Naive thymus-derived CD4-positive, alpha-beta T cell (primary cell): ENCODE measurements at regions of chr10 and their contacts with region 1.

Region 1: GRCh38 chr10:62681211-62681940 is 123.1 kb upstream of the ADO start:
- DNase-seq: peak in 8 of 9 donors; percentile 7 to 84 (median 22)
- ATAC-seq: peak; percentile 96
- H3K4me3 ChIP-seq: no peak overlapping the region
- H3K4me3 Mint-ChIP-seq: peak overlapping the region in 1 of 10 donors; percentile 59
- H3K27ac ChIP-seq: no peak overlapping the region
- H3K27ac Mint-ChIP-seq: peak overlapping the region in 3 of 9 donors; percentile 11 to 83 (median 78)
- H3K4me1 ChIP-seq: peaks cover 6 to 18% of the 10 kb centered on the region in 2 donors
- H3K4me1 Mint-ChIP-seq: peaks cover 8 to 45% (median 14%) of the 10 kb centered on the region in 7 donors
- H3K27me3 ChIP-seq: no peaks in the 10 kb centered on the region
- H3K27me3 Mint-ChIP-seq: peaks cover 0 to 6% (median 0%) of the 10 kb centered on the region in 5 donors

Region 2: DNA sequence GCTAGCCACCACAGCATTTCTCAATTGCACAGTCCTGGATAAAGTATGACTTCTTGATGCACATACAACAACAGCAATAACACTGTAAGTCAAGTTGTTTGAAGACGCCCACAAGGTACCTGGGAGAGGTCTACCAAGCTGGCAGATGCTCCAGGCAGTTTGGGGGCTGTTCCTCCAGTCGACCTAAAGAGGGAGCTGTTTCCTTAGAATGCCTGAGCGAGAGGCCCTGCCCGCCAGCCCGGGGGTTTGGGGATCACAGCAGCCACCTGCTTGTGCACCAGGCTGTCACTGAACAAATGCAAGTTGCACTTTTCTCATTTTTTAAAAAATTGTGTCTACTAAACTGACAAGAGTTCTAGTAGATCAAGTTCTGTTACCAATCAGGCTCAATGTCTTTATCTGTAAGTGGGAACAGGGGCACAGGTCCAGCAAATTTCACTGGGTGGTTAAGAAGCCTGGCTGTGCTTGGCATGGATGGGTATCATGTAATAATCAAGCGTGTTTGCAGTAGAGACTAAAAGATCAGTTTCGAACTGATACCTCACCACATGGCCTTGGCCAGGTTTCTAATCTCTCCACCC is 70.6 kb before region 1 on chr10:
- CTCF ChIA-PET with region 1: no interaction called
- POLR2A ChIA-PET with region 1: no interaction called
- intact Hi-C with region 1: loop called in 1 of 2 experiments (anchors 1 kb)
- DNase-seq: peak; percentile 48 to 81 (median 74)
- ATAC-seq: peak; percentile 93
- H3K4me3 ChIP-seq: no peak overlapping the region
- H3K4me3 Mint-ChIP-seq: no peak overlapping the region
- H3K27ac ChIP-seq: no peak overlapping the region
- H3K27ac Mint-ChIP-seq: peak overlapping the region in 1 of 9 donors; percentile 50
- H3K4me1 ChIP-seq: no peaks in the 10 kb centered on the region
- H3K4me1 Mint-ChIP-seq: peaks cover 0 to 36% (median 0%) of the 10 kb centered on the region in 7 donors
- H3K27me3 ChIP-seq: no peaks in the 10 kb centered on the region
- H3K27me3 Mint-ChIP-seq: peaks cover 0 to 14% (median 4%) of the 10 kb centered on the region in 5 donors

Region 3: DNA sequence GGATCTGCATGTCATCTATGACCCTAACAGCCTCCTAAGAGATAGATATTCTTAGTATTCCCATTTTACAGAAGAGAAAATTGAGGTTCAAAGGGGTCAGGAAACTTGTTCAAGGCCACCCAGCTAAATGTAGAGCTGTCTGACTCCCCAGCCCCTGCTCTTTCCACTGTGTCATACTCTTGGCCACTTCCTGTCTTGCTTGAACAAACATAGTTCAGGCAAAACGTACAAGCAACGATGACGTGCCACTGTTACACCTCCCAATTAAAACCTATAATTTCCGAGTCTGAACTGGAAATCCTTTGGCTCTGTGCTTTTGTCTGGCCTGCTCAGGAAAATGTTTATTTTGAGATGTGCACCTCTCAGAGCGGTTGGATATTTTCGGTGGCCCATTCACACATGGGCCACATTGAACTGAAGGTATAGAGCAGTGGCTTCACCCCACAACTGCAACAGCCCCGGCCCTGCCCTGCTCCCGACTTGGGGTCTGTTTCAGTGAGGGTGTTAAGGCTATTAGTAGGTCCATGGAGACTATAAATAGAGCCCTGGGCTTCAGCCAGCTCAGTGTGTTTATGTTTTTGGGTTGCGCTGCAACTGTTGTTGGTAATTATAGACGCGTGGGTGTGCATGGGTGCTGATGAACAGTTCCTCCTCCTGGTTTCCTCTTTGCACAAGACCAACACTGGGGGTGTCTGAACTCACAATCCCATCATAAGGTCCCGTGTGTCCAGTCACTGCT is 49.1 kb before region 1 on chr10:
- CTCF ChIA-PET with region 1: interaction called, 3 read pairs
- POLR2A ChIA-PET with region 1: no interaction called
- intact Hi-C with region 1: loop called (anchors 1 to 5 kb)
- DNase-seq: peak in 8 of 9 donors; percentile 45 to 69 (median 54)
- ATAC-seq: peak; percentile 82
- H3K4me3 ChIP-seq: peak overlapping the region; percentile 19
- H3K4me3 Mint-ChIP-seq: peak overlapping the region in 4 of 10 donors; percentile 19 to 67 (median 45)
- H3K27ac ChIP-seq: no peak overlapping the region
- H3K27ac Mint-ChIP-seq: peak overlapping the region; percentile 3 to 89 (median 54)
- H3K4me1 ChIP-seq: peaks cover 15 to 29% of the 10 kb centered on the region in 2 donors
- H3K4me1 Mint-ChIP-seq: peaks cover 8 to 40% (median 15%) of the 10 kb centered on the region in 7 donors
- H3K27me3 ChIP-seq: no peaks in the 10 kb centered on the region
- H3K27me3 Mint-ChIP-seq: no peaks in the 10 kb centered on the region

Region 4: DNA sequence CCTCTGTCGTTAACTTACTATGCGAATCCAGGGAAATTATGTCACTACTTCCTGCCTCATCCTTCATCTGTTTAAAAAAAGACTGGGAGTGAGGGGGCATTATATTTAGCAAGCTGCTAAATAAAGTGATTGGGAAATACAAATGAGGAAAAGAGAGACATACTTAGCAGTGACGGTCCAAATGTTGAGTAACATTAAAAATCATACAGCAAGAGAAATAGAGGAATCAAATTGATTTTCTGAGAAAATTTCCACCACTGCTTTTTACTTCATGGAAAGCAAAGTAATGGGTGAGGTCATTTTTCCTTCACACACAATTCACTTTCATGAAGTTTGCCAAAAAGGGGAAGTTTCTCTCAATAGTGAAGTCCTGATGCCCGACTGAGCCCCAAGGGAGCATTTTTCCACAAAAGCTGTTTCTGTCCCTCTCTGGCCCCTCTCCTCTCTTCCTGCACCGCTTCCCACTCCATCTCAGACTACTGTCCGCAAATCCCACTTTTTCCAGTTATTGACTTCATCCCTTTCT is 61.2 kb after region 1 on chr10:
- CTCF ChIA-PET with region 1: no interaction called
- POLR2A ChIA-PET with region 1: no interaction called
- intact Hi-C with region 1: no loop called
- DNase-seq: no peak
- ATAC-seq: no peak
- H3K4me3 ChIP-seq: no peak overlapping the region
- H3K4me3 Mint-ChIP-seq: no peak overlapping the region
- H3K27ac ChIP-seq: no peak overlapping the region
- H3K27ac Mint-ChIP-seq: no peak overlapping the region
- H3K4me1 ChIP-seq: no peaks in the 10 kb centered on the region
- H3K4me1 Mint-ChIP-seq: peaks cover 0 to 12% (median 0%) of the 10 kb centered on the region in 7 donors
- H3K27me3 ChIP-seq: no peaks in the 10 kb centered on the region
- H3K27me3 Mint-ChIP-seq: no peaks in the 10 kb centered on the region

Region 5: DNA sequence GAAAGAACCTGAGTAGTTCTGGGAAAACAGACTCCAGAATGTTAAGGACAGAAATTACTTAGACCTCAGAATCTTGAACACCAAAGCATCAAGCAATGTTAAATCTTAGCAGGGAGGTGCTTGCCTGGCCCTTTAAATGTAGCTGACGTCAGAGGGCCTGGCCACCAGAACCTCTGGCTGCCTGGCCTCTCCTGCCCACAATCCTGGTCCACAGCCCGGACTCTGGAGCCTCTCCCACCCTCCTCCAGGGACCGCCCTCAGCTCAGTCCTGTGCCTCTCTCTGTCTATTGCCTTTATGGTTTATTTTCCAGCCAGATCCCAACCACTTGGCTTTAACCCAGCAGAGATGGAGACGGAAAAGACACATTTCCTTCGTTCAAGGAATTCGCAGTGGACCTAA is 177.0 kb after region 1 on chr10:
- CTCF ChIA-PET with region 1: no interaction called
- POLR2A ChIA-PET with region 1: no interaction called
- intact Hi-C with region 1: loop called in 1 of 2 experiments (anchors 1 kb)
- DNase-seq: no peak
- ATAC-seq: no peak
- H3K4me3 ChIP-seq: no peak overlapping the region
- H3K4me3 Mint-ChIP-seq: no peak overlapping the region
- H3K27ac ChIP-seq: no peak overlapping the region
- H3K27ac Mint-ChIP-seq: no peak overlapping the region
- H3K4me1 ChIP-seq: peaks cover 0 to 38% of the 10 kb centered on the region in 2 donors
- H3K4me1 Mint-ChIP-seq: peaks cover 13 to 54% (median 24%) of the 10 kb centered on the region in 7 donors
- H3K27me3 ChIP-seq: no peaks in the 10 kb centered on the region
- H3K27me3 Mint-ChIP-seq: peaks cover 0 to 18% (median 13%) of the 10 kb centered on the region in 5 donors

Region 6: GRCh38 chr10:62916141-62916603 is 234.8 kb after region 1 on chr10:
- CTCF ChIA-PET with region 1: no interaction called
- POLR2A ChIA-PET with region 1: no interaction called
- intact Hi-C with region 1: no loop called
- DNase-seq: no peak
- ATAC-seq: no peak
- H3K4me3 ChIP-seq: no peak overlapping the region
- H3K4me3 Mint-ChIP-seq: no peak overlapping the region
- H3K27ac ChIP-seq: no peak overlapping the region
- H3K27ac Mint-ChIP-seq: no peak overlapping the region
- H3K4me1 ChIP-seq: no peaks in the 10 kb centered on the region
- H3K4me1 Mint-ChIP-seq: peaks cover 0 to 3% (median 0%) of the 10 kb centered on the region in 7 donors
- H3K27me3 ChIP-seq: no peaks in the 10 kb centered on the region
- H3K27me3 Mint-ChIP-seq: peaks cover 4 to 16% (median 9%) of the 10 kb centered on the region in 5 donors

Region 7: GRCh38 chr10:63554657-63555056 is 873.3 kb after region 1 on chr10:
- CTCF ChIA-PET with region 1: no interaction called
- POLR2A ChIA-PET with region 1: no interaction called
- intact Hi-C with region 1: no loop called
- DNase-seq: peak in 7 of 9 donors; percentile 38 to 63 (median 44)
- ATAC-seq: peak; percentile 94
- H3K4me3 ChIP-seq: no peak overlapping the region
- H3K4me3 Mint-ChIP-seq: peak overlapping the region in 5 of 10 donors; percentile 3 to 62 (median 15)
- H3K27ac ChIP-seq: no peak overlapping the region
- H3K27ac Mint-ChIP-seq: peak overlapping the region; percentile 4 to 86 (median 43)
- H3K4me1 ChIP-seq: peaks cover 0 to 8% of the 10 kb centered on the region in 2 donors
- H3K4me1 Mint-ChIP-seq: peaks cover 9 to 29% (median 26%) of the 10 kb centered on the region in 7 donors
- H3K27me3 ChIP-seq: no peaks in the 10 kb centered on the region
- H3K27me3 Mint-ChIP-seq: no peaks in the 10 kb centered on the region